CD8-positive, alpha-beta T cell (primary cell): ENCODE measurements at regions of chr11 and their contacts with region 1.

Region 1: DNA sequence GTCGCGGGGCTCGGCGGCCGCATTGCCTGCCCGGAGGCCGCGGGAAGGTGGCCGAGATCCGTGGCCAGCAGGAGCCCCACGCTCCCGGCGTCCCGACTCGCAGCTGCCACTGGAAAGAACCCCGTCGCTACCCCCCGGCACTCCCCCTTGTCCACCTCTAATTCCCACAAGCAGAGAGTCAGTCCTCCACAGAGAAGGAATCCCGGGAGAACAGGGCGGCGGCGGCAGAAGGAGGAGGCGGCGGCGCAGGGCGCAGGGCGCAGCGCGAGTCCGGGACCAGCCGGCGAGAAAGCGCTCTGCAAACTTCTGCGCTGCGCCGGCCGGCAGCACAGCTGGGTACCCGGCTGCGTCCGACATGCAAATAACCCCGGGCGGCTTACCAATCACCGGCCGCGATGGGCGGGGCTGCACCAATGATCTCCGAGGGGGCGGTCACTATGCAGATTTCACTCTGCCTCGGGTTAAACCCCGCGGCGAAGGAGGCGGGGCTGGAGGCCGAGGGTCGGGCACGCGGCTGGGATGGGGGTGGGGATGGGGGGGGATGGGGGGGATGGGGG is at the start of gene ABTB2:
- DNase-seq: peak; percentile 94 to 98 (median 97)
- ATAC-seq: peak; percentile 89
- H3K4me3 ChIP-seq: peak within 1 kb of the TSS; percentile 65 to 86
- H3K4me3 Mint-ChIP-seq: peak within 1 kb of the TSS; percentile 87
- H3K27ac ChIP-seq: peak within 1 kb of the TSS; percentile 21 to 38
- H3K27ac Mint-ChIP-seq: peak within 1 kb of the TSS; percentile 74
- H3K4me1 ChIP-seq: peaks cover 22% of the 10 kb centered on the region
- H3K4me1 Mint-ChIP-seq: peaks cover 19% of the 10 kb centered on the region
- H3K27me3 ChIP-seq: peaks cover 18 to 26% of the 10 kb centered on the region in 2 experiments
- H3K27me3 Mint-ChIP-seq: peaks cover 43% of the 10 kb centered on the region
- CTCF ChIP-seq: no peak
- total RNA-seq, gene ABTB2: 2.2 to 2.7 TPM

Region 2: GRCh38 chr11:32893343-32894148 is 1464.2 kb before region 1 on chr11:
- CTCF ChIA-PET with region 1: no interaction called
- POLR2A ChIA-PET with region 1: no interaction called
- intact Hi-C with region 1: loop called (anchors 5 to 10 kb)
- DNase-seq: peak in 8 of 9 experiments; percentile 21 to 75 (median 54)
- ATAC-seq: peak; percentile 50
- H3K4me3 ChIP-seq: peak overlapping the region; percentile 79 to 87
- H3K4me3 Mint-ChIP-seq: peak overlapping the region; percentile 92
- H3K27ac ChIP-seq: peak overlapping the region; percentile 36 to 51
- H3K27ac Mint-ChIP-seq: peak overlapping the region; percentile 74
- H3K4me1 ChIP-seq: peaks cover 27% of the 10 kb centered on the region
- H3K4me1 Mint-ChIP-seq: peaks cover 33% of the 10 kb centered on the region
- H3K27me3 ChIP-seq: no peaks in the 10 kb centered on the region
- H3K27me3 Mint-ChIP-seq: no peaks in the 10 kb centered on the region
- CTCF ChIP-seq: peak; percentile 35

Region 3: DNA sequence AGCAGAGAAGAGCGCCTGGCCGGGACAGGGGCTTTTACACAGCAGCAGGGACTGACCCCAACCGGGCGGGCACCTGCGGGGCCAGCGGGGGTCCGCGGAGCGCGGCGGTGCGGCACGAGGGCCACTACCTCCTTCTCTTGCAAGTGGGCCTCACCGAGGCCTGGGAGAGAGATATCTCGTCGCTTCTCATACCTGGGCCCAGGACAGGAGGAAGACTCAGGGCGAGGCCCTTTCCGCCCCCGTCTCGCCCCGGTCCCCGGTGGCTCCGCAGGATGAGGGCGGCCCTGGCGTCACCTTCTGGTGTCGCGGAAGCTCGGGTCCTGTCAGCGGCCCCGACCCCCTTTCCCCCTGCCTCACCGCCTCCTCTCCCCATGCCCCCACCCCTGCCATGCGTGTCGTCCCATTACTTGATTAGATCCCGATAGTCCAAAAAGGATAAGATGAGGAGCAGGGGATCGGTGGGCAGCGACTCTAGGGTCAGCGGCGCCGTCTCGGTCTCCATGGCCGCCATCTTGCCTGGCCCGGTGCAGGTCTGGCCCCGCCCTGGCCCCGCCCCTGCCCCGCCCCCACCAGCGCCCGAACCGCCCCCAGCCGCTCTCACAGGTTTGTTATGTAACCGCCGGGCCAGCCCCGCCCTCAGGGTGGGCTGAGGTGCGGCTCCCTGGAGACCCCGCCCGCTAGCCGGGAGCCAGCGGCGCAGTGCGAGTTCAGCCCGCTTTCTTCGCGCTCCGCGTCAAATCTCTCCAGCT is 583.6 kb before region 1 on chr11 and contains the start of gene FBXO3:
- CTCF ChIA-PET with region 1: no interaction called
- POLR2A ChIA-PET with region 1: no interaction called
- intact Hi-C with region 1: loop called in 1 of 2 experiments (anchors 10 kb)
- DNase-seq: peak; percentile 73 to 93 (median 88)
- ATAC-seq: peak; percentile 89
- H3K4me3 ChIP-seq: peak within 1 kb of the TSS; percentile 91 to 96
- H3K4me3 Mint-ChIP-seq: peak within 1 kb of the TSS; percentile 98
- H3K27ac ChIP-seq: peak within 1 kb of the TSS; percentile 71 to 80
- H3K27ac Mint-ChIP-seq: peak within 1 kb of the TSS; percentile 96
- H3K4me1 ChIP-seq: peaks cover 29% of the 10 kb centered on the region
- H3K4me1 Mint-ChIP-seq: peaks cover 49% of the 10 kb centered on the region
- H3K27me3 ChIP-seq: peaks cover 2 to 10% of the 10 kb centered on the region in 2 experiments
- H3K27me3 Mint-ChIP-seq: peaks cover 8% of the 10 kb centered on the region
- CTCF ChIP-seq: no peak
- total RNA-seq, gene FBXO3: 54.8 to 55.4 TPM

Region 4: GRCh38 chr11:33996498-33997454 is 361.0 kb before region 1 on chr11:
- CTCF ChIA-PET with region 1: interaction called, 18 read pairs
- POLR2A ChIA-PET with region 1: no interaction called
- intact Hi-C with region 1: loop called in 1 of 2 experiments (anchors 1 kb)
- DNase-seq: peak; percentile 50 to 84 (median 75)
- ATAC-seq: peak; percentile 100
- H3K4me3 ChIP-seq: no peak overlapping the region
- H3K4me3 Mint-ChIP-seq: peak overlapping the region; percentile 59
- H3K27ac ChIP-seq: no peak overlapping the region
- H3K27ac Mint-ChIP-seq: no peak overlapping the region
- H3K4me1 ChIP-seq: peaks cover 7% of the 10 kb centered on the region
- H3K4me1 Mint-ChIP-seq: peaks cover 13% of the 10 kb centered on the region
- H3K27me3 ChIP-seq: peaks cover 0 to 2% of the 10 kb centered on the region in 2 experiments
- H3K27me3 Mint-ChIP-seq: peaks cover 18% of the 10 kb centered on the region
- CTCF ChIP-seq: peak; percentile 75

Region 5: DNA sequence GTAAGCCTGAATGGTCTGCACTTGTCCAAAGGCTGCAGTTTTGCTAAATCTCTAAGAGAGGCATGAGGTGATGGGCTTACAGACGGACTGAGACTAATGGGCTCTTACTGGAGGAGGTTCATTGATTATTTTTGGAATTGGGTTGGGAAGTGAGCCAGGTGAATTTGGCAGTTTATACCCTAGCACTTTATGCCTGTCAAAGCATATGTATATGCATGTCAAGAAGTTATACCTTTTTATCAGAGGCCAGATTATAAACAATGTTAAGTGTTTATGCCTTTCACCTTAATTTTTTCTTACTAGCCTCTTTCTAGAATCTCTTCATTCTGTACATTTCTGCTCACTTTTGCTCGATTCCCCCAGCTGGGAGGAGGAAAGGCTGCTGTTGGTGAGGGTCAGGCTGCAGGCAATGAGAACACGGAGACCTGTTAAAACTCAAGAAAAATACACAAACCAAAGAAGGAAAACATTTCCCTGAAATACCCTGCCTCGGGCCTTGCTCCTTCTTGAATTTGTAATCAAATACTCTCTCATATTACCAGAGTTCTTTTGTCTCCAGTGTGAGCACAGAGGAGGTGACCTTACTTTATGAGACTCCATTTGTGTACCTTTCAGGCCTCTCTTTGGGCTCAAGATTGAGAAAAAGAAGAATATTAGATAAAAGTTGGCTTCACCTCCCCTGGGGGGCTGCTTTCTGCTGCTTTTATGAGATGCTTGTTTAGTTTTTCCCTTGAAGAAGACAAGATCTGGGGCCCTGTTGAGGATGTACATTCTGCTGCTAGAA is 232.7 kb before region 1 on chr11:
- CTCF ChIA-PET with region 1: interaction called, 3 read pairs
- POLR2A ChIA-PET with region 1: no interaction called
- intact Hi-C with region 1: loop called in 1 of 2 experiments (anchors 5 kb)
- DNase-seq: no peak
- ATAC-seq: no peak
- H3K4me3 ChIP-seq: no peak overlapping the region
- H3K4me3 Mint-ChIP-seq: no peak overlapping the region
- H3K27ac ChIP-seq: no peak overlapping the region
- H3K27ac Mint-ChIP-seq: no peak overlapping the region
- H3K4me1 ChIP-seq: no peaks in the 10 kb centered on the region
- H3K4me1 Mint-ChIP-seq: no peaks in the 10 kb centered on the region
- H3K27me3 ChIP-seq: no peaks in the 10 kb centered on the region
- H3K27me3 Mint-ChIP-seq: no peaks in the 10 kb centered on the region
- CTCF ChIP-seq: no peak

Region 6: DNA sequence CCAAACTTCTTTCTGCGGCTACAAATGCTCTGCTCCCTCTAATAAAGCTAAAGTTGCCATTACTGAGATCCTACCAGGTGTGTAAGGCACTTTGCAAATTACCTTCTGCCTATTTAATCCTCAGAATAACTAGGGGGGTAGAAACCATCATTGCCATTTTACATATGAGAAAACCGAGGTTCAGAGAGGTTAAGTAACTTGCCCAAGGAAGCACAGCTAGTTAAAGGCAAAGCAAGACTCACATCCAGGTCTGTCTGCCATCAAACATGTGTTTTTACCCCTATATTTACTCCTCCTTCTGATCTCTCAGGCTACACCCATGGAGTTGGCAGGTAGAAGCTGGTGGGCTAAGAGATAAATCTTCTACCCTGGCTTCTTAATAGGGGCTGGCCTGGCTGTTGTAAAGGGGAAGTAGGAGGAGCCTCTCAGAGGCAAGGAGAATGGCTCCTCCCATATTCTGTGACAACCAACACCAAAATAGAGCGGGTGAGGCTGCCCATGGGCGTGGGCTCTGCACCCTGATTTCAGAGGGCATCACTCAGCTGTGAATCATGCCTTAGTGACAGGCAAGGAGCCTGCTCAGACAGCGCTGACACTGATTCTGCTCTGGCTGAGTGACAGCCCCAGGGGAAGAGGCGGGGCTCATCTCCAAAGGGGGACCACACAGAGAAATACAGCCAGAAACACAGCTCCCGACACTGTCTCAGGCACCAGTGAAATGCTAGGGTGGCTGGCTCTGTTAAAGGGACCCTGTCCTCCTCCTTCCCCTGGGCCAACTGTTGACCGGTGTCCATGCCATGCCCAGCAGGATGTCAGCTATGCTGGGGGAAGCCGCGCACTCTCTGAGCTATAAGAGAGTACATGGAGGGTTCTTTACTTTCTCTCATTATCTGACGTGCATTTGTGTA is 106.8 kb before region 1 on chr11:
- CTCF ChIA-PET with region 1: interaction called, 6 read pairs
- POLR2A ChIA-PET with region 1: interaction called, 8 read pairs
- intact Hi-C with region 1: loop called (anchors 1 to 2 kb)
- DNase-seq: peak; percentile 33 to 90 (median 79)
- ATAC-seq: peak; percentile 94
- H3K4me3 ChIP-seq: peak overlapping the region; percentile 1 to 47
- H3K4me3 Mint-ChIP-seq: peak overlapping the region; percentile 66
- H3K27ac ChIP-seq: no peak overlapping the region
- H3K27ac Mint-ChIP-seq: peak overlapping the region; percentile 84
- H3K4me1 ChIP-seq: peaks cover 51% of the 10 kb centered on the region
- H3K4me1 Mint-ChIP-seq: peaks cover 54% of the 10 kb centered on the region
- H3K27me3 ChIP-seq: no peaks in the 10 kb centered on the region
- H3K27me3 Mint-ChIP-seq: peaks cover 3% of the 10 kb centered on the region
- CTCF ChIP-seq: no peak

Region 7: GRCh38 chr11:34274723-34275401 is 82.9 kb before region 1 on chr11:
- CTCF ChIA-PET with region 1: no interaction called
- POLR2A ChIA-PET with region 1: no interaction called
- intact Hi-C with region 1: no loop called
- DNase-seq: no peak
- ATAC-seq: no peak
- H3K4me3 ChIP-seq: no peak overlapping the region
- H3K4me3 Mint-ChIP-seq: no peak overlapping the region
- H3K27ac ChIP-seq: no peak overlapping the region
- H3K27ac Mint-ChIP-seq: no peak overlapping the region
- H3K4me1 ChIP-seq: no peaks in the 10 kb centered on the region
- H3K4me1 Mint-ChIP-seq: no peaks in the 10 kb centered on the region
- H3K27me3 ChIP-seq: no peaks in the 10 kb centered on the region
- H3K27me3 Mint-ChIP-seq: no peaks in the 10 kb centered on the region
- CTCF ChIP-seq: no peak

Region 8: GRCh38 chr11:34916015-34916842 is 558.5 kb after region 1 on chr11 and contains the starts of genes APIP and PDHX:
- CTCF ChIA-PET with region 1: no interaction called
- POLR2A ChIA-PET with region 1: no interaction called
- intact Hi-C with region 1: loop called in 1 of 2 experiments (anchors 10 kb)
- DNase-seq: peak; percentile 86 to 96 (median 94)
- ATAC-seq: peak; percentile 89
- H3K4me3 ChIP-seq: peak within 1 kb of the TSS; percentile 70 to 94
- H3K4me3 Mint-ChIP-seq: peak within 1 kb of the TSS; percentile 96
- H3K27ac ChIP-seq: peak within 1 kb of the TSS; percentile 57 to 72
- H3K27ac Mint-ChIP-seq: peak within 1 kb of the TSS; percentile 97
- H3K4me1 ChIP-seq: peaks cover 18% of the 10 kb centered on the region
- H3K4me1 Mint-ChIP-seq: peaks cover 53% of the 10 kb centered on the region
- H3K27me3 ChIP-seq: no peaks in the 10 kb centered on the region
- H3K27me3 Mint-ChIP-seq: no peaks in the 10 kb centered on the region
- CTCF ChIP-seq: no peak
- total RNA-seq, gene APIP: 5.4 to 6.4 TPM
- total RNA-seq, gene PDHX: 20.3 to 21.4 TPM